ENCODE measurements at regions of chr7 and their contacts with region 1.

Region 1: GRCh38 chr7:157432957-157433576 is 96.3 kb downstream of the DNAJB6 start:
- DNase-seq: peak; percentile 23
- H3K4me3 ChIP-seq: peak overlapping the region in 1 of 2 donors; percentile 20
- H3K27ac ChIP-seq: no peak overlapping the region
- H3K4me1 ChIP-seq: no peaks in the 10 kb centered on the region
- H3K27me3 ChIP-seq: no peaks in the 10 kb centered on the region
- CTCF ChIP-seq: peak; percentile 29 to 74 (median 64)
- POLR2A ChIP-seq: no peak

Region 2: DNA sequence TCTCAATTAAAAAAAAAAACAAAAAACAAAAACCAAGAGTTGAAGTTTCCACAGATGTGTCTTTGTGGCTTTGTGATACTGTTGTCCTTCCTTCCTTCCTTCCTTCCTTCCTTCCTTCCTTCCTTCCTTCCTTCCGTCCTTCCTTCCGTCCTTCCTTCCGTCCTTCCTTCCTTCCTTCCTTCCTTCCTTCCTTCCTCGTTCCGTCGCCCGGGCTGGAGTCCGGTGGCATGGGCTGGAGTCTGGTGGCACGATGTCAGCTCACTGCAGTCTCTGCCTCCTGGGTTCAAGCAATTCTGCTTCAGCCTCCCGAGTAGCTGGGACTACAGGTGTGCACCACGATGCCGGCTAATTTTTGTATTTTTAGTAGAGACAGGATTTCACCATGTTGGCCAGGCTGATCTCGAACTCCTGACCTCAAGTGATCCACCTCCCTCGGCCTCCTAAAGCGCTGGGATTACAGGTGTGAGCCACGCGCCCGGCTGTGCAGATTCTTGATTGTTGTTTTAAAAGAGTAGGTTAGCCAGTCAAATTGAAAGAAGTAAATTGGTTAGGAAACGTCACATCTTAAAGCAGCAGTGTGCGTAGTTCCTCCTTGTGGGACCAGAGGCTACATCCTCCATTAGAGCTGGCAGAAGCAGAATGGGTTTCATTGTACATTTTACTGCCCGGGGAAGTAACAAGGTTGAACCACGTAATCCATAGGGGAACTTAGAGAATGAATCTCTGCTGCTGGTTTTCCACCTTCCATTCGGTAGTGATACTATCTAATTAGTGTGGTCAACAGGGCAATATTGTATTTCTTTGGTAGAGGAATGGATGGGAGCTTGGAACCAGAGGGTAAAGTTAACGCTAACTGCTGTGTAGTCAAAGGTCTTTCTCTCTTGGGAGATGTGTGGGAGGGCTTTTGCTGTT is 75.7 kb before region 1 on chr7:
- intact Hi-C with region 1: no loop called
- DNase-seq: no peak
- H3K4me3 ChIP-seq: no peak overlapping the region
- H3K27ac ChIP-seq: no peak overlapping the region
- H3K4me1 ChIP-seq: peaks cover 8% of the 10 kb centered on the region
- H3K27me3 ChIP-seq: no peaks in the 10 kb centered on the region
- CTCF ChIP-seq: no peak
- POLR2A ChIP-seq: no peak

Region 3: DNA sequence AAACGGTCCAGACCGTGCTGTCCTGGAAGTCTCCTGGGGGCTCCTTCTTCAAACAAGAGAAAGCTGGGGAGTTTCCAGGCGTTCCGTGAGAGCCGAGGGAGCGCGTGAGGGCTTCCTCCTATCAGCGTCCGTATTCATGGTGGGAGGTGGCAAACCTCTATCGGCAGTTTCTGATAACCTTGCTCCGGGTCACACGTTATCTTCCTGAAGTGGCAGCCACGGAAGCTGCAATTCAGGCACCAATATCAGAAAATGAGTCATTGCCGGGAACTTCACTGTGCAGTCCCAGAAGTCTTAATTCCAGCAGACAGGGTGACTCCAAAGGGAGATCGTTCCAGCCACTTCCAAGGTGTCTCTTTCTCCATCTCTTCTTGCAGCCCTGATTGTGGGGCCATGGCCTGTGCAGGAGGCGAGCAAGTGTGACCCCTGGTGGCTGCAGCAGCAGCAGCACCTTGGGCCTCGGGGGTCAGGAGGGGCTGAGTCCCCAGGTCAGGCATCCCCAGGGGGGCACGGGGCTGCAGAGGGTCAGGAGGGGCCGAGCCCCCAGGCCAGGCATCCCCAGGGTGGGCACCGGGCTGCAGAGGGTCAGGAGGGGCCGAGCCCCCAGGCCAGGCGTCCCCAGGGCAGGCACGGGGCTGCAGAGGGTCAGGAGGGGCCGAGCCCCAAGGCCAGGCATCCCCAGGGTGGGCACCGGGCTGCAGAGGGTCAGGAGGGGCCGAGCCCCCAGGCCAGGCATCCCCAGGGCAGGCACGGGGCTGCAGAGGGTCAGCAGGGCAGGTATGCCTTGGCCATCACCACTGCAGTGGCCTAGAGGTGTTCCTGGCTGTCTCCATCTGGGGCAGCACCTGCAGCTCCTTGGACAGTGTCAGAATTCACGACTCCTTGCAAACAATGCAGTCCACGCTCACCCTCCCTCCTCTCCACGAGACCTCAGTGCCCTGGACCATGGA is 442.4 kb after region 1 on chr7:
- intact Hi-C with region 1: loop called (anchors 10 kb)
- DNase-seq: no peak
- H3K4me3 ChIP-seq: no peak overlapping the region
- H3K27ac ChIP-seq: no peak overlapping the region
- H3K4me1 ChIP-seq: no peaks in the 10 kb centered on the region
- H3K27me3 ChIP-seq: no peaks in the 10 kb centered on the region
- CTCF ChIP-seq: peak in 3 of 4 experiments; percentile 35 to 54 (median 44)
- POLR2A ChIP-seq: no peak

Region 4: DNA sequence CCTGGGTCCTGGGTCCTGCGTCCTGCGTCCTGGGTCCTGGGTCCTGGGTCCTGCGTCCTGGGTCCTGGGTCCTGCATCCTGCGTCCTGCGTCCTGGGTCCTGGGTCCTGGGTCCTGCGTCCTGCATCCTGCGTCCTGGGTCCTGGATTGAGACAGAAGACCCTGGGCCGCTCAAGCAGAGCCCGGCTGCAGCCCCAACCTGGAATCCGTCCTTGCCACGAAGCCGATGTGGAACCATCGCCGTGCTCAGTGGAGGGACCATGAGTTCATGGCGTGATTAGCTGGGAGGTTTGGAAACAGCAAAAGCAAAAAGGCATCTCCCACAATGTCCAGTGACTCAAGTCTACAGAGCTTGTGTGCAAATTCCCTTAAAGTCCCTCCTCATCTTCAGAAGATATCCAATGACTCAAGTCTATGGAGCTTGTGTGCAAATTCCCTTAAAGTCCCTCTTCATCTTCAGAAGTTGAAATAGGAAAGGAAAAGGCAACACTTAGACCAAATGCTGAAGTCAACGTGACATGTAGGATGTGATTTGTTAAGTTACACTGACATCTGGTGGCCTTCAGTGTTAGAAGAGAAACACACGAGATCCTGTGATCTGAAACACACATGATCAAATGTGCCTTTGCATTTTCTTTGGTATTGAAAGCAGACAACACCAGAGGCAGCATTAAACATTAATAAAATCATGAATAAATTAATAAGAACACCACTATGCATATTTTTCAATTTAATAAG is 974.7 kb after region 1 on chr7:
- intact Hi-C with region 1: loop called (anchors 5 kb)
- DNase-seq: no peak
- H3K4me3 ChIP-seq: no peak overlapping the region
- H3K27ac ChIP-seq: no peak overlapping the region
- H3K4me1 ChIP-seq: no peaks in the 10 kb centered on the region
- H3K27me3 ChIP-seq: no peaks in the 10 kb centered on the region
- CTCF ChIP-seq: peak in 3 of 4 experiments; percentile 36 to 71 (median 64)
- POLR2A ChIP-seq: no peak